ENCODE measurements at regions of chr10 and their contacts with region 1.

Region 1: GRCh38 chr10:128047351-128047750 is 78.9 kb downstream of the MKI67 start:
- DNase-seq: peak; percentile 92
- ATAC-seq: peak; percentile 96
- H3K4me3 Mint-ChIP-seq: peak overlapping the region; percentile 83
- H3K27ac Mint-ChIP-seq: peak overlapping the region; percentile 94
- H3K4me1 Mint-ChIP-seq: peaks cover 51% of the 10 kb centered on the region
- H3K27me3 Mint-ChIP-seq: no peaks in the 10 kb centered on the region

Region 2: DNA sequence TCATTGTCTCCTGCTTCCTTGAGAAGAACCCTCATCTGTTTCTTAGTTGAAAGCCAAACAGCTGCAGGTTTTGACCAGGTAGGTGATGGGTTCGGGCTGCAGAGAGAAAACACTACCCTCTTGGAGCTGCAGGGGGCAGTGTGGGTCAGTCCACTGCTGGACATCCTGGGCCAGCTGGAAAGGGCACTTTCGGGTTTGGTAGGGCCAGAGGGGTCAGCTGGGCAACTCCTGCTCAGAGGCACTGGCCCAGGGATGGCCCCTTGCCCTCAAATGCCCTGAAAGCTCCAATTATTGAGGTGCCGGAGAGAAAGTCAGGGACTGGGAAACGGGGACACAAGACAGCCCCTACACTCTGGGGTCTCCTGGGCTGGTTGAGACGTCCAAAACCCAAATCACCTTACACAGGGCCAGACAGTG is 11.8 kb before region 1 on chr10:
- CTCF ChIA-PET with region 1: interaction called, 71 read pairs
- POLR2A ChIA-PET with region 1: no interaction called
- intact Hi-C with region 1: no loop called
- DNase-seq: peak; percentile 81
- ATAC-seq: peak; percentile 88
- H3K4me3 Mint-ChIP-seq: no peak overlapping the region
- H3K27ac Mint-ChIP-seq: no peak overlapping the region
- H3K4me1 Mint-ChIP-seq: peaks cover 6% of the 10 kb centered on the region
- H3K27me3 Mint-ChIP-seq: no peaks in the 10 kb centered on the region

Region 3: DNA sequence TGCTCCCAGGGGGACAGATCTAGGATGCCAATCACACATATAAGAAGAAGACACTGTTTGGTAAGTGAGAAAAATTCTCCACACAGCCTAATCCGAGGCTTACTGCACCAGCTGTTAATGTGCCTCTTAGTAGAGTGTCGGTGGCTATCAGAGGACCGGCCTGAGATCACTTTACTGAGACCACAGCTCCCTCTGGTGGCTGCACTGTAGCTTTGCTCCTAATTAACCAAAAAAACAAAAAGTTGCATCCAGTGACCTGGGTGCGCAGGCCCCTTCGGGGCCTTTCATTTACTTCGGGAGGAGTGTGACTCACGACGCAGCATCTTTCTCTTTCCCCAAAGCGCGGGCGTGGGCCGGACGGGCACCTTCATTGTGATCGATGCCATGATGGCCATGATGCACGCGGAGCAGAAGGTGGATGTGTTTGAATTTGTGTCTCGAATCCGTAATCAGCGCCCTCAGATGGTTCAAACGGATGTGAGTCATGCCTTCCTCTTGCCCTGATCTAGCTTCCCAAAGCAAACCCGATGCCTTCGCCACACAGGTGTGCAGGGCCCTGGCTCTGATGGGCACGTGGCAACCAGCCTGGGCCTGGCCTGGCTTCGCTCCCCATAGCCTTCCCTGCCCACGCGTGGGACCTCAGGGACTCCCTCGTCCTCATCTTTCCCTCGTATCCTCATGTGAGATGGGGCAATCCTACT is 22.1 kb after region 1 on chr10:
- CTCF ChIA-PET with region 1: interaction called, 47 read pairs
- POLR2A ChIA-PET with region 1: interaction called, 60 read pairs
- intact Hi-C with region 1: loop called (anchors 1 kb)
- DNase-seq: peak; percentile 91
- ATAC-seq: peak; percentile 35
- H3K4me3 Mint-ChIP-seq: no peak overlapping the region
- H3K27ac Mint-ChIP-seq: no peak overlapping the region
- H3K4me1 Mint-ChIP-seq: peaks cover 39% of the 10 kb centered on the region
- H3K27me3 Mint-ChIP-seq: no peaks in the 10 kb centered on the region

Region 4: GRCh38 chr10:128111696-128112095 is 64.3 kb after region 1 on chr10:
- CTCF ChIA-PET with region 1: no interaction called
- POLR2A ChIA-PET with region 1: no interaction called
- intact Hi-C with region 1: no loop called
- DNase-seq: no peak
- ATAC-seq: no peak
- H3K4me3 Mint-ChIP-seq: no peak overlapping the region
- H3K27ac Mint-ChIP-seq: no peak overlapping the region
- H3K4me1 Mint-ChIP-seq: no peaks in the 10 kb centered on the region
- H3K27me3 Mint-ChIP-seq: no peaks in the 10 kb centered on the region

Region 5: DNA sequence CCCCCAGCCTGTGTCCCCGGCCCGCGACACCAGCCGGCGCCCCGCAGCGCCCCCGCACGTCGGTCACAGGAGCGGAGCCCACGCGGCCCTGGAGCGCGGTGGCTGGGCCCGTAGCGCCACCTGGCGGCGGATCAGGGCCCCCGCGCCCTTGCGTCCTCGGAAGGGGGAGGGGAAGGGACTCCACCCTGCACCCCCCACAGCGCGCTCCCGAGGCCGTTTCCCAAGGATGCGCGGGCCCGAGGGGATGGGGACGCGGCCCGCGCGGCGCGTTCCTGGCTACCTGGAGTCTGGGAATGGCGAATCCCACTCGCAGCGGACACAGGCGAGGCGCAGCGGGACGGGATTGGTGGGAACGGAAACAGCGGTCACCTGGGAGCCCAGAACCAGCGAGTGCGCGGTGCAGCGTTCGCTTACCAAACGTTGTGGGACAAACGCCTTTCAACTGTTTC is 102.7 kb after region 1 on chr10:
- CTCF ChIA-PET with region 1: interaction called, 15 read pairs
- POLR2A ChIA-PET with region 1: no interaction called
- intact Hi-C with region 1: no loop called
- DNase-seq: peak; percentile 89
- ATAC-seq: peak; percentile 96
- H3K4me3 Mint-ChIP-seq: peak overlapping the region; percentile 60
- H3K27ac Mint-ChIP-seq: no peak overlapping the region
- H3K4me1 Mint-ChIP-seq: peaks cover 21% of the 10 kb centered on the region
- H3K27me3 Mint-ChIP-seq: no peaks in the 10 kb centered on the region

Region 6: GRCh38 chr10:128221117-128221516 is 173.8 kb after region 1 on chr10:
- CTCF ChIA-PET with region 1: no interaction called
- POLR2A ChIA-PET with region 1: no interaction called
- intact Hi-C with region 1: no loop called
- DNase-seq: no peak
- ATAC-seq: no peak
- H3K4me3 Mint-ChIP-seq: no peak overlapping the region
- H3K27ac Mint-ChIP-seq: no peak overlapping the region
- H3K4me1 Mint-ChIP-seq: peaks cover 9% of the 10 kb centered on the region
- H3K27me3 Mint-ChIP-seq: peaks cover 6% of the 10 kb centered on the region

Measured in activated CD4-positive, alpha-beta T cell treated with anti-CD3 and anti-CD28 coated beads for 36 hours (primary cell).